ENCODE measurements at regions of chr6 and their contacts with region 1.

Region 1: GRCh38 chr6:158972241-158973233 is 27.5 kb downstream of the RSPH3 start:
- DNase-seq: no peak
- ATAC-seq: peak in 1 of 2 donors; percentile 56
- H3K4me3 ChIP-seq: no peak overlapping the region
- H3K27ac ChIP-seq: no peak overlapping the region
- H3K4me1 ChIP-seq: no peaks in the 10 kb centered on the region
- H3K27me3 ChIP-seq: no peaks in the 10 kb centered on the region
- CTCF ChIP-seq: peak; percentile 31 to 60 (median 44)
- POLR2A ChIP-seq: no peak

Region 2: GRCh38 chr6:158704181-158704822 is 268.2 kb before region 1 on chr6:
- in situ Hi-C with region 1: loop called in 3 of 4 experiments (anchors 5 to 10 kb)
- intact Hi-C with region 1: loop called (anchors 1 kb)
- DNase-seq: peak; percentile 41 to 73
- ATAC-seq: peak; percentile 71 to 74
- H3K4me3 ChIP-seq: peak overlapping the region; percentile 37 to 58 (median 46)
- H3K27ac ChIP-seq: peak overlapping the region in 1 of 4 donors; percentile 43
- H3K4me1 ChIP-seq: peaks cover 18 to 24% of the 10 kb centered on the region in 2 donors
- H3K27me3 ChIP-seq: no peaks in the 10 kb centered on the region
- CTCF ChIP-seq: peak in 4 of 5 experiments; percentile 91 to 99 (median 94)
- POLR2A ChIP-seq: no peak

Region 3: DNA sequence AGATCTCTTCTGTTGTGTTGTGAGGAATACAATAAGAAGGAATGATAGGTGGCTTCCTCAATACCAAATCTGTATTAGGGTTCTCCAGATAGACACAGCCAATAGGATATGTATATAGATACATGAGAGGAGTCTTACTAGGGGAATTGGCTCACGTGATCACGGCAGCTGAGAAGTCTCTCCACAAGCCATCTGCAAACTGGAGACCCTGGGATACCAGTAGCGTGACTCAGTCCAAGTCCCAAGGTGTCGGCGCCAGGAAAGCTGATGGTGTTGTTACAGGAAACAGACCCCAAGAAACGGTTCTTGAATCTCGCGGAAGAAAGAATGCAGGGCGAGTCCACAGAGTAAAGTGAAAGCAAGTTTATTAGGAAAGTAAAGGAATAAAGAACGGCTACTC is 261.3 kb before region 1 on chr6:
- in situ Hi-C with region 1: loop called in 3 of 4 experiments (anchors 5 to 10 kb)
- intact Hi-C with region 1: no loop called
- DNase-seq: no peak
- ATAC-seq: no peak
- H3K4me3 ChIP-seq: no peak overlapping the region
- H3K27ac ChIP-seq: no peak overlapping the region
- H3K4me1 ChIP-seq: peaks cover 7 to 12% of the 10 kb centered on the region in 2 donors
- H3K27me3 ChIP-seq: no peaks in the 10 kb centered on the region
- CTCF ChIP-seq: no peak
- POLR2A ChIP-seq: no peak

Region 4: GRCh38 chr6:158793432-158793831 is 179.1 kb before region 1 on chr6:
- in situ Hi-C with region 1: no loop called
- intact Hi-C with region 1: loop called (anchors 2 kb)
- DNase-seq: no peak
- ATAC-seq: peak; percentile 57 to 68
- H3K4me3 ChIP-seq: no peak overlapping the region
- H3K27ac ChIP-seq: peak overlapping the region in 1 of 4 donors; percentile 69
- H3K4me1 ChIP-seq: peaks cover 0 to 15% of the 10 kb centered on the region in 2 donors
- H3K27me3 ChIP-seq: no peaks in the 10 kb centered on the region
- CTCF ChIP-seq: peak in 3 of 5 experiments; percentile 16 to 37 (median 33)
- POLR2A ChIP-seq: no peak

Measured in gastrocnemius medialis (tissue), 4 donors.